HepG2 (cell line): ENCODE measurements at regions of chr14 and their contacts with region 1.

Region 1: DNA sequence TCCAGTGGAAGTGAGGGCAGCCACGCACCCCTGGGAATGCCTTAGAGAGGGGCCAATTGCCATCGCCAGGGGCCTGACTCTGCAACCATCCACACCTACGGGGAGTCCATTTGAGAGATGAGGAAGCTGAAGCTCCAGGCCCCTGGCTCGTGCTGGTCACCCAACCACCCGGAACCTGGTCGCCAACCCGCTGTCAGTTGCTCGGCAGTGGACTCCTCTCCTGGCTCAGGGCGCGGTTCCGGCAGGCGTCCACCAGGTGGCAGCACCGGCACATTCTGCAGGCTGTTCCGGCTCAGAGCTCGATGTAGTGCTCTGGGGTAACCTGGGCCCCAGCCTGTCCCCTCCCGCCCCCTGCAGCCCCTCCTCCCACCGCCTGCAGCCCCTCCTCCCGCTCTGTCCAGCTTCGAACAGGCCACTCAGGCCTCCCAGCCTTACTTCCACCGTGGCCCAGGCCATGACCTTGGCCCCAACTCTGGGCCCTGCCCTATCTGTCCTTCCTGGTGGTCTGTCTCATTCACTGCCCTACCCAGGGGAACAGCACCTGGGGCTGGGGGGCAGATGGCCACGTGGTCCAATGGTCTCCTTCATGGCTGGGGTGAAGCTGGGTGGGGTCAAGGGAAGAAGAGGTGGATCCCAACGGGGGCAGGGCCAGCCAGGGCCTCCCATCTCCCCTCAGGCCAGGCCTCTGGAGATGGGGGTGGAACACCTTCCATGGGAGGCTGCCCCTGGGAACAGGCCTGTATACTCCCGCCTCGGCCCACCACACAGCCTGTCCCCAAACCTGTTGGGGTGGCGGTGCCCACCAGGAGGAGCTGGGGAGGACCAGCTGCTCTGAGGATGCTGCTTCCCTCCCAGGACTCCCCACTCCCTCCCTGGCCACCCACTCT is 15.7 kb downstream of the SIVA1 start:
- DNase-seq: peak; percentile 86
- ATAC-seq: peak; percentile 79
- H3K4me3 ChIP-seq: peak overlapping the region; percentile 65 to 78 (median 67)
- H3K27ac ChIP-seq: peak overlapping the region; percentile 97
- H3K4me1 ChIP-seq: peaks cover 29% of the 10 kb centered on the region
- H3K27me3 ChIP-seq: no peaks in the 10 kb centered on the region; a peak in 1 of 5 replicates
- CTCF ChIP-seq: peak; percentile 95
- EP300 ChIP-seq: peak in 1 of 2 experiments; percentile 32; a peak in 2 of 4 replicates
- POLR2A ChIP-seq: peak; percentile 26 to 62; a peak in 2 of 4 replicates
- RAD21 ChIP-seq: peak; percentile 86

Region 2: DNA sequence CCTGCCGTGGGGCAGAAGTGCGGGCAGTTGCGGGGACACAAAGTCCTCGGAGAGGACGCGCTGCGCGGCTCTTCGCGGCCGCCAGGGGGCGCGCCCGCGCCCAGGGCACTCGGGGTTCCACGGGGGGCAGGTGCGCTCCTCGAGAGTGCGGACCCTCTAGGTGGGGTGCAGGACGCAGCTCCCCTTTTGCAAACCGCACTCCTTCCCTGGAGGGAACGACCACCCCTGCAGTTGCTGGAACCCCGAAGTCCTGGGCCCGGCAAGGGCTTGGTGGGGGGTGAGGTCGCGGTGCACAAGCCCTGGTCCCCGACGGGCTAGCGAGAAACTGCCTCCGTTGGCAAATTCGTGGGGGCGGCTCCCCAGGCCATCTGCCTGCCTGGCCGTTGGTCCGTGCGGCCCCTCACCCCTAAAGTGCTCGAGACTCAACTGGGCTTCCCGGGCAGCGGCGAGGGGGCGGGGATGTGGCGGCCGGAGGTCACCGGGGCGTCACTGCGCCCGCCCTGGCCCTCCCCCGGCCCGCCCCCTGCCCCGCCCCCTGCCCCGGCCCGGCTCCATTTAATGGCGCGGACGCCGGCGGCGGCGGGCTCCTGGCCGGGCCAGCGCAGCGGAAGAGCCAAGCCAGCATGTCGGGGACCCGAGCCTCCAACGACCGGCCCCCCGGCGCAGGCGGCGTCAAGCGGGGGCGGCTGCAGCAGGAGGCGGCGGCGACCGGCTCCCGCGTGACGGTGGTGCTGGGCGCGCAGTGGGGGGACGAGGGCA is 44.9 kb before region 1 on chr14 and contains the start of gene ADSS1:
- CTCF ChIA-PET with region 1: no interaction called
- POLR2A ChIA-PET with region 1: interaction called, 15 read pairs
- in situ Hi-C with region 1: no loop called
- intact Hi-C with region 1: no loop called
- DNase-seq: peak; percentile 24
- ATAC-seq: peak; percentile 40
- H3K4me3 ChIP-seq: peak within 1 kb of the TSS; percentile 63 to 90 (median 68)
- H3K27ac ChIP-seq: peak within 1 kb of the TSS; percentile 49
- H3K4me1 ChIP-seq: peaks cover 67% of the 10 kb centered on the region
- H3K27me3 ChIP-seq: peaks cover 0 to 3% of the 10 kb centered on the region in 2 experiments; a peak in 1 of 5 replicates
- CTCF ChIP-seq: peak; percentile 90
- EP300 ChIP-seq: no peak
- POLR2A ChIP-seq: peak in 1 of 2 experiments; percentile 27; a peak in 1 of 4 replicates
- RAD21 ChIP-seq: peak; percentile 70
- total RNA-seq, gene ADSS1: 0.98 and 1.0 TPM in 2 replicates

Region 3: GRCh38 chr14:104794641-104795467 is 26.2 kb after region 1 on chr14:
- CTCF ChIA-PET with region 1: interaction called, 3 read pairs
- POLR2A ChIA-PET with region 1: interaction called, 23 read pairs
- in situ Hi-C with region 1: no loop called
- intact Hi-C with region 1: no loop called
- DNase-seq: no peak
- ATAC-seq: peak; percentile 16
- H3K4me3 ChIP-seq: peak overlapping the region; percentile 70 to 88 (median 78)
- H3K27ac ChIP-seq: peak overlapping the region; percentile 57
- H3K4me1 ChIP-seq: peaks cover 62% of the 10 kb centered on the region
- H3K27me3 ChIP-seq: no peaks in the 10 kb centered on the region
- CTCF ChIP-seq: peak; percentile 37; the same call in 1 of the 2 replicates
- EP300 ChIP-seq: no peak
- POLR2A ChIP-seq: no peak
- RAD21 ChIP-seq: no peak

Region 4: GRCh38 chr14:104820669-104821228 is 52.1 kb after region 1 on chr14:
- CTCF ChIA-PET with region 1: interaction called, 15 read pairs
- POLR2A ChIA-PET with region 1: interaction called, 59 read pairs
- in situ Hi-C with region 1: loop called (anchors 5 kb)
- intact Hi-C with region 1: loop called (anchors 1 kb)
- DNase-seq: peak; percentile 81
- ATAC-seq: peak; percentile 90
- H3K4me3 ChIP-seq: peak overlapping the region; percentile 27 to 68 (median 41); a peak in 5 of 6 replicates
- H3K27ac ChIP-seq: no peak overlapping the region
- H3K4me1 ChIP-seq: peaks cover 42% of the 10 kb centered on the region
- H3K27me3 ChIP-seq: no peaks in the 10 kb centered on the region
- CTCF ChIP-seq: peak; percentile 94
- EP300 ChIP-seq: peak in 1 of 2 experiments; percentile 85; a peak in 1 of 4 replicates
- POLR2A ChIP-seq: peak in 1 of 2 experiments; percentile 32; a peak in 1 of 4 replicates
- RAD21 ChIP-seq: peak; percentile 88

Region 5: GRCh38 chr14:104865644-104866441 is 97.2 kb after region 1 on chr14:
- CTCF ChIA-PET with region 1: interaction called, 11 read pairs
- POLR2A ChIA-PET with region 1: interaction called, 21 read pairs
- in situ Hi-C with region 1: loop called (anchors 5 kb)
- intact Hi-C with region 1: loop called (anchors 2 kb)
- DNase-seq: no peak
- ATAC-seq: peak; percentile 28
- H3K4me3 ChIP-seq: peak overlapping the region; percentile 78 to 91 (median 84)
- H3K27ac ChIP-seq: peak overlapping the region; percentile 44
- H3K4me1 ChIP-seq: peaks cover 25% of the 10 kb centered on the region
- H3K27me3 ChIP-seq: no peaks in the 10 kb centered on the region; a peak in 1 of 5 replicates
- CTCF ChIP-seq: 0 out of 2 replicates have a peak, but pooled peaks have one; percentile 9
- EP300 ChIP-seq: no peak
- POLR2A ChIP-seq: no peak
- RAD21 ChIP-seq: no peak